ENCODE measurements at regions of chr20 and their contacts with region 1.

Region 1: DNA sequence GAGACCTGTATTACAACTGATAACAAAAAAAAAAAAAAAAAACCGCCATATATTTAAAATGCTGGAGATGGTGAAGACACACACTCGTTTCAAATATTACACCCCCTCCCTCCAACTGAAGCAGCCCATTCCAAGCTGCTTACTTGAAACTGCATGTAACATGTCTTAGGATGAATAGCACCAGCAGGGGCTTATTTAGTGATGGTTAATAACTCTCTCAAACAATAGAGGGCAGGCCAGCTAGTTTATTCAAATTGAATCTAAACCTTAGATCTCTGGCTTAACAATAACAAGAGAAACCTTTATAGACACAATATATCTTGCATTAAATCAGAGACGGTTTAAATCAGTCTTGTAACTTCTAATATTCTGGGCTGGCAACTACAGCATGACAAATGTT is 9.3 kb upstream of the JPH2 start:
- DNase-seq: peak; percentile 15
- H3K4me3 ChIP-seq: no peak overlapping the region
- H3K27ac ChIP-seq: no peak overlapping the region
- H3K4me1 ChIP-seq: peaks cover 6% of the 10 kb centered on the region
- H3K27me3 ChIP-seq: no peaks in the 10 kb centered on the region

Region 2: DNA sequence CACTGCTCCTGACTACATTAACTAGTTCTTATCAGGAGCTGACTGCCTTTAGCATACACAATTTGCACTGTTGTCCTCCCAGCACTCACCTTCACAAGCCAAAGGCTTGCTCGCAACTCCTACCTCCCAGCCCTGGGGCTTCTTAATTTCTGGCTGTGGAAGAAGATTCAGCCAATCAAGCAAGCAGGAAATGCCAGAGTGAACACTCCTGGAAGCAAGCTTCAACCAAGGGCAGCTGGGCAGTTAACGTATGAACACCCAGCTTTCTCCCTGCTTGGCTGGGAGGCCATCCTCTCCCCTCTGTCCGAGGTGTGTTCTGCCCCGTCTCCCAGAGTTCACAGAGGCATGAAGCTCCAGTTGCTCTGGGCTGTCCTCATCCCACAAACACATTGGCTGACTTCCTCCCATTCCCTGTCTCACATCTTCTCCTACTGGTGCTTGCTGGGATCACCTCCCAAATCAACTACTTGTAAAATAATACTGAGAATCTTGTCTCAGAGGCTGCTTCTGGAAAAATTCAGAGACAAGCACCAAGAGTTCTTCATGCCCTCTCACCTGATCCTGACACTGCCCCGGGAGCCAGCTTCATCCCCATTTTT is 753.9 kb before region 1 on chr20:
- in situ Hi-C with region 1: no loop called
- DNase-seq: peak; percentile 42
- H3K4me3 ChIP-seq: no peak overlapping the region
- H3K27ac ChIP-seq: no peak overlapping the region
- H3K4me1 ChIP-seq: 0 out of 2 replicates have a peak, but pooled peaks cover 3% of the 10 kb centered on the region
- H3K27me3 ChIP-seq: no peaks in the 10 kb centered on the region; the same call in 1 of the 2 replicates

Region 3: GRCh38 chr20:43721429-43722152 is 474.7 kb before region 1 on chr20:
- in situ Hi-C with region 1: no loop called
- DNase-seq: no peak
- H3K4me3 ChIP-seq: no peak overlapping the region
- H3K27ac ChIP-seq: no peak overlapping the region
- H3K4me1 ChIP-seq: no peaks in the 10 kb centered on the region
- H3K27me3 ChIP-seq: no peaks in the 10 kb centered on the region

Region 4: DNA sequence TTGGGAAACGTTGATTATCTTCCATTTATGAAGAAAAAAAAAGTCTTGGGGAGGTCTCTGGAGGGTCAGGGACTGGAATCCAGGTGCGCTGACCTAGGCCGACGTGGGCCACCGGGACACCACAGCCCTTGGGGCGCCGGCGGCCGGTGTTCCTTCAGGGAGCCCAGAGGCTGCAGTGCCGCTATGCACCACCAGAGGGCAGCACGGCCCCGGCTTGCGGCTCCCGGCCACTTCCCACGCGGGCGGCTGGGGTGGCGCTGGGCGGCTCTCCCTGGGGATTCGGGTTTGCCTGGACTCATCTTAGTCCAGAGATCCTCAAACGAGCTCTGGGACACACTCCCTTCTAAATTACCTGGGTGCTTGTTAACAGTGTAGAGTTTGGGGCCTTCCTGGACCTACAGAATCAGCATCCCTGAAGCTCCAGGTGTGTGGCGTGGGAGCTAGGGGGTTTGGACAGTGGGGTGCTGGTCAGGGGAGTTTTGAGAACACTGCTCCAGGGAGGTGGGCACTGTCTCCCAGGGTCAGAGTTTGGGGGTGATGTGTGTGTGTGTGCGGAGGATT is 446.5 kb before region 1 on chr20:
- in situ Hi-C with region 1: loop called (anchors 10 kb)
- DNase-seq: peak; percentile 75
- H3K4me3 ChIP-seq: no peak overlapping the region
- H3K27ac ChIP-seq: no peak overlapping the region
- H3K4me1 ChIP-seq: peaks cover 23% of the 10 kb centered on the region
- H3K27me3 ChIP-seq: no peaks in the 10 kb centered on the region

Region 5: DNA sequence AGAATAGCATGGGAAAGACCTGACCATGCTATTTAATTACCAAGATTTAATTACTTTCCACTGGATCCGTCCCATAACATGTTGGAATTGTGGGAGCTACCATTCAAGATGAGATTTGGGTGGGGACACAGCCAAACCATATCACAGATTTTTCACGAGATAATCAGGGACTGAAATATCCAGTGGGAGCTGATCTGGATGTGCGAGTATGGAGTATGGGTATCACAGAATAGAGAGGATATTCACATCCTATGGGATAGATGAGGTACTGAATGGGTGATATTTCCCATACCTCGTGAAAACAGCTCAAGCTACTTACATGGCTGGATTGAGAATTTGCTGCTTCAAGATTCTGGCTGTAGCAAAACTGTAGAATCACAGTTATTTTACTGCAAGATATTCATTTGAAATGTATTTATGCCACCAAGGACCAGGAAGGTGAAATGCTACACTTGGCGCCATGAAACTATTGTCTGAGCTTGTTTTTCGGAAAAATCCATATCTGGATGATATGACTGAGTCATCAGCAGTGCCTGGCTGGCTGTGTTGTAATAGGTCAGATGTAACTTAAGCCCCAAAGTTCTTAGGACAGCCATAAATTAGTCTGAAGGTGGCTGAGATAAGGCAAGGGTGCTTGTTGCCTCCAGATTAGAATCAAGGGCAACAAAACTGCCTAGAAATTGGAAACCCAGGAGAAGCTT is 874.8 kb after region 1 on chr20:
- in situ Hi-C with region 1: no loop called
- DNase-seq: peak; percentile 28
- H3K4me3 ChIP-seq: no peak overlapping the region
- H3K27ac ChIP-seq: no peak overlapping the region
- H3K4me1 ChIP-seq: peaks cover 24% of the 10 kb centered on the region
- H3K27me3 ChIP-seq: no peaks in the 10 kb centered on the region

Measured in GM23248 (cell line).